ENCODE measurements at regions of chr3 and their contacts with region 1.

Region 1: DNA sequence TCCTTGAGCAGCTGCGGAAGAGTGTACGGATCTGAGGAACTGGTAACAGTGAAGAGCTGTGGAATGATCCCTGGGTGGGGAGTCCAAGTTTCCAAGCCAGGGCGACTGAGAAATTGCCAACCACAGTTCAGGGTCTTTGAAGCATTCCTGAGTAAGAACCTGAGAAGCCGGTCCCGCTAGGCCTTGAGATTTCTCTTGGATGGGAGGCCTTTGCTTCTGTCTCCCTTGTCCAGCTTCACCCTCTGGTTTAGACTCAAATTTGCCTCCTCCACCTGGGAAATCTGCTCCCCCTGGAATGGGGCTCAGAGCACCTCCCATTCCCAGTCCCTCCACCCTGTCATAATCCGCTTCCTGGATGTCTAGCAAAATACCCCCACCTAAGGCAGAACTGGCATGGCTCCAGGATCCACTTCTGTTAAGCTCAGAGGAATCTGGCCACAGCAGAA is 127.7 kb upstream of the DLG1 start:
- DNase-seq: peak in 1 of 2 experiments; percentile 17
- H3K4me3 ChIP-seq: no peak overlapping the region
- H3K27ac ChIP-seq: no peak overlapping the region
- H3K4me1 ChIP-seq: peaks cover 19% of the 10 kb centered on the region
- H3K27me3 ChIP-seq: no peaks in the 10 kb centered on the region
- CTCF ChIP-seq: no peak

Region 2: GRCh38 chr3:197234947-197235914 is 190.9 kb before region 1 on chr3:
- CTCF ChIA-PET with region 1: no interaction called
- POLR2A ChIA-PET with region 1: interaction called, 13 read pairs
- intact Hi-C with region 1: no loop called
- DNase-seq: no peak
- H3K4me3 ChIP-seq: no peak overlapping the region
- H3K27ac ChIP-seq: no peak overlapping the region
- H3K4me1 ChIP-seq: no peaks in the 10 kb centered on the region
- H3K27me3 ChIP-seq: no peaks in the 10 kb centered on the region
- CTCF ChIP-seq: no peak

Region 3: GRCh38 chr3:197394464-197395321 is 31.5 kb before region 1 on chr3:
- CTCF ChIA-PET with region 1: no interaction called
- POLR2A ChIA-PET with region 1: interaction called, 10 read pairs
- intact Hi-C with region 1: no loop called
- DNase-seq: peak; percentile 91 to 97
- H3K4me3 ChIP-seq: no peak overlapping the region
- H3K27ac ChIP-seq: peak overlapping the region; percentile 70
- H3K4me1 ChIP-seq: peaks cover 15% of the 10 kb centered on the region
- H3K27me3 ChIP-seq: peaks cover 14% of the 10 kb centered on the region
- CTCF ChIP-seq: no peak

Region 4: DNA sequence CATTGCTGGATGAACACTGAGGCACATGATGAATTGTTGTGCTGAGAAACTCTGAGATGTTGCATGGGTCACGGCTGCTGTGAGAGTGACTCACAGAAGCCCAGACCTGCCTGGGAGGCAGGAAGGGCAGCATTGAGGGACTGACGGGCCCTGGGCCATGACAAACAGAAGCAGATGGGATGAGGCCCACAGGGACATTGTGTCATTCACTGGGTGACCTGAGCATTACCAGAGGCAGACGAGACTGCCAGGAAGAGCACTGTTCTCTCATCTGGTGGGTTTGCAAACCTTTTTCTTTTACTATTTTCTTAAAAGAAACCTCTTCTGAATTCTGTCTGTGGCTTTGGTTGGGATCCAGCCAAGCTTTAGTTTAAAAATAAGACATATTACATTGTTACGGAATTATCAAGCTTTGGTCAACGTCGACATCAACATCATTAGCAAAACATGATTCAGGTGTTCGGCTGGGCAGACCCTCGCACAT is 61.8 kb after region 1 on chr3:
- CTCF ChIA-PET with region 1: interaction called, 3 read pairs
- POLR2A ChIA-PET with region 1: interaction called, 5 read pairs
- intact Hi-C with region 1: loop called (anchors 2 kb)
- DNase-seq: peak; percentile 94 to 97
- H3K4me3 ChIP-seq: peak overlapping the region; percentile 3; the same call in 1 of the 2 replicates
- H3K27ac ChIP-seq: peak overlapping the region; percentile 71
- H3K4me1 ChIP-seq: peaks cover 67% of the 10 kb centered on the region
- H3K27me3 ChIP-seq: no peaks in the 10 kb centered on the region
- CTCF ChIP-seq: no peak

Measured in PC-9 (cell line).